ENCODE measurements at regions of chr7 and their contacts with region 1.

Region 1: GRCh38 chr7:103573479-103574058 is 127.6 kb upstream of the SLC26A5 start:
- DNase-seq: no peak
- H3K4me3 ChIP-seq: no peak overlapping the region
- H3K27ac ChIP-seq: no peak overlapping the region
- H3K4me1 ChIP-seq: no peaks in the 10 kb centered on the region
- H3K27me3 ChIP-seq: no peaks in the 10 kb centered on the region
- CTCF ChIP-seq: peak in 2 of 3 experiments; percentile 3 to 21; a peak in 2 of 4 replicates
- EP300 ChIP-seq: no peak
- POLR2A ChIP-seq: no peak
- RAD21 ChIP-seq: peak in 1 of 2 experiments; percentile 65

Region 2: DNA sequence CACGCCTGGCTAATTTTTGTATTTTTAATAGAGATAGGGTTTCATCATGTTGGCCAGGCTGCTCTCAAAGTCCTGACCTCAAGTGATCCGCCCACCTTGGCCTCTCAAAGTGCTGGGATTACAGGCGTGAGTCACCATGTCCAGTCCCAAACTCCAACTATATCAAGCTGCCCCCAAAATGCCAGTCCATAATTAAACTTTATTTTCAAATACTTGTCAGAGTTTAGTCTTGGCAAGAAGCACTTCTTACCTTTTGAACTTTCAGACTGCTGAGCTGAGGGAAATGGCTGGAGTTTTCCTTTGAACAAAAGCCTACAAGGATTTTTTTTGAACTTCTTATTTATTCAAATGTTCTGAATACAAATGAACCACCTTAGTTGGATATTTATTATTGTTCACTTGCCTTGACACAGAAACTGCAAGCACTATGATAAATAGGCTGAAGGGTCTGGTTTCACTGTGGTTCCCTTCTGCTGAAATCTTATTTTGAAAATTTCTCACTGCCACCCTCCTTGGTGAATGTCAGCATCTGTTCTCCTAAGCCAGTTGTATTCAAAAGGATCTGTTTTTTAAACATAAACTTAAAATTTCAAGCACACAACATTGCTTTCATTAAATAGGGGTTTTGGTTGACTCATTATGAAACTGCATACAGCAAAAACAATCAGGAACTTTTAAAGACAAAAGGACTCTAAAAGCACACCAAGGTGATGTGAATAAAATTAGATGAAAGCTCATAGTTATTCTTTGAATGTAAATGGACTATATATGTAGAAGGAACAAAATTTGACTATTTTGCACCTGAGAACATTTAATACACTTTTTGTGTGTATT is 25.9 kb before region 1 on chr7:
- CTCF ChIA-PET with region 1: no interaction called
- POLR2A ChIA-PET with region 1: no interaction called
- DNase-seq: no peak
- H3K4me3 ChIP-seq: no peak overlapping the region
- H3K27ac ChIP-seq: no peak overlapping the region
- H3K4me1 ChIP-seq: no peaks in the 10 kb centered on the region
- H3K27me3 ChIP-seq: no peaks in the 10 kb centered on the region
- CTCF ChIP-seq: no peak
- EP300 ChIP-seq: no peak
- POLR2A ChIP-seq: no peak
- RAD21 ChIP-seq: no peak

Region 3: DNA sequence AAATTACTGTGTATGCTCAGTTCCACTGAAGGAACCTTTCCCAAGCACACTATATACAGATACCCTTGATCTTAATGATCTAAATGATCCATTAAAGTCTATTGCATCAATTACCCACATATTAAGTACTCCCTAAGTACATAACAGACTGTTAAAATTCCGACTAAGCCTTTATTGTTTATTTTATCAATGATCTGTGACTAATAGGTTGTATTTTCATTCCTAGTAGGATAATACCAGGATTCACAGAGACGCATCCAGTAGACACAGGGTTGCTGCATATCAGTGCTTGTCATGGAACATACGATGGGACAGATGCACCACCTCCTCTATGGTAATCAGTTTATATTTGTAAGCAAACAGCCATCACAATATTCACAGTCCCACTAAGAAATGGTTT is 32.1 kb after region 1 on chr7:
- CTCF ChIA-PET with region 1: no interaction called
- POLR2A ChIA-PET with region 1: no interaction called
- DNase-seq: no peak
- H3K4me3 ChIP-seq: no peak overlapping the region
- H3K27ac ChIP-seq: no peak overlapping the region
- H3K4me1 ChIP-seq: no peaks in the 10 kb centered on the region
- H3K27me3 ChIP-seq: no peaks in the 10 kb centered on the region
- CTCF ChIP-seq: no peak
- EP300 ChIP-seq: no peak
- POLR2A ChIP-seq: no peak
- RAD21 ChIP-seq: no peak

Region 4: DNA sequence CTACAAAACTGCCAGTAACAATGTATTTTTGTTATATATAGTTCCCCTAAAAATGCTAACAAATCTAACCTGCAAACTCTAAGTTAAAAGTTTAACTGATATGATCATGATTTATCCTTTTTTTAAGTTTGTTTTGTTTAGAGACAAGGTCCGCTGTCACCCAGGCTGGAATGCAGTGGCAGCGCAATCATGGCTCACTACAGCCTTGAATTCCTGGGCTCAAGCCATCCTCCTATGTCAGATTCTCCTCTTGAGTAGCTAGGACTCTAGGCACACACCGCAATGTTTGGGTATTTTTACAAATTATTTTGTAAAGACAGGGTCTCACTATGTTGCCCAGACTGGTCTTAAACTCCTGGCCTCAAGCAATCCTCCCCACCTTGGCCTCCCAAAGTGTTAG is 587.7 kb after region 1 on chr7:
- CTCF ChIA-PET with region 1: interaction called, 10 read pairs
- POLR2A ChIA-PET with region 1: no interaction called
- DNase-seq: no peak
- H3K4me3 ChIP-seq: no peak overlapping the region
- H3K27ac ChIP-seq: no peak overlapping the region
- H3K4me1 ChIP-seq: no peaks in the 10 kb centered on the region
- H3K27me3 ChIP-seq: no peaks in the 10 kb centered on the region
- CTCF ChIP-seq: no peak
- EP300 ChIP-seq: no peak
- POLR2A ChIP-seq: no peak
- RAD21 ChIP-seq: no peak

Measured in H1 (cell line).